CD4-positive, alpha-beta T cell (primary cell): ENCODE measurements at regions of chr9 and their contacts with region 1.

Region 1: DNA sequence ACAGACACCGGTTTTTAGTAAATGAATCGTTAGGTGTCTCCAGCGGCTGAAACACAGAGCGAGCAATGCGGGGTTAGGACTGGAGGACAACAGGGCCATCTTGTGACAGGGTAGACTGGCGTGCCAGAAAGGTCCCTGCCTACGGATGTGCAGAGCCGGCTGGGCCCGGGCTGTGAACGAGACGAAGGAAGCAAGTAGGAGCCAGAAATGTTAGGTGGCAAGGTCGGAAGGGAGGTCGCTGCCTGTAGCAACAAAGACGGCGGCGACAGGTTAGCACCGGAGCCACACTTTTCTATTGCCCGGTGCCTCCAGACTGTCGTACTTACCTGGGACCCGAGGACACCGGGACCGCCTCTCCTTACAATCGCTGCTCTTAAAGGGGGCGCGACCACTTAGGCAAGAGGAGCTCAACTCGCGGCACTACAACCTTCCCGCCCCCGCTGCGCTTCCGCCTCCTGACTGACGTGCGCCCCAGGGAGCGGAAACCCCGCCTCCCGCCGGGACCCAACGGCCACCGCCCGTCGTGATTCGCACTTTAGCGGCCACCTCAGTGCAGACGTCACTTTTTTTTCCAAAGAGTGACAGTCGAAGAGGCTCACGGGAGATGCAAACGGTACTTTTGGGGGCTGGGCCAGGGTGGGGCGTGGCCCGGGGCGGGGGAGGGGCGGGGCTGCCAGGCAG is at the start of gene INIP:
- DNase-seq: peak; percentile 91 to 99 (median 95)
- ATAC-seq: peak; percentile 89
- H3K4me3 ChIP-seq: peak within 1 kb of the TSS; percentile 96
- H3K4me3 Mint-ChIP-seq: peak within 1 kb of the TSS; percentile 99
- H3K27ac ChIP-seq: peak within 1 kb of the TSS; percentile 92 to 95
- H3K27ac Mint-ChIP-seq: peak within 1 kb of the TSS; percentile 99
- H3K4me1 ChIP-seq: peaks cover 15% of the 10 kb centered on the region
- H3K4me1 Mint-ChIP-seq: peaks cover 32% of the 10 kb centered on the region
- H3K27me3 ChIP-seq: no peaks in the 10 kb centered on the region
- H3K27me3 Mint-ChIP-seq: no peaks in the 10 kb centered on the region
- CTCF ChIP-seq: peak; percentile 34
- total RNA-seq, gene INIP: 7.8 to 9.1 TPM

Region 2: GRCh38 chr9:111525056-111525977 is 1192.5 kb before region 1 on chr9 and contains the start of gene ZNF483:
- CTCF ChIA-PET with region 1: no interaction called
- POLR2A ChIA-PET with region 1: interaction called, 5 read pairs
- intact Hi-C with region 1: loop called in 1 of 2 experiments (anchors 5 kb)
- DNase-seq: peak; percentile 54 to 90 (median 68)
- ATAC-seq: peak; percentile 90
- H3K4me3 ChIP-seq: peak within 1 kb of the TSS; percentile 93
- H3K4me3 Mint-ChIP-seq: peak within 1 kb of the TSS; percentile 97
- H3K27ac ChIP-seq: peak within 1 kb of the TSS; percentile 67 to 70
- H3K27ac Mint-ChIP-seq: peak within 1 kb of the TSS; percentile 97
- H3K4me1 ChIP-seq: peaks cover 19% of the 10 kb centered on the region
- H3K4me1 Mint-ChIP-seq: peaks cover 23% of the 10 kb centered on the region
- H3K27me3 ChIP-seq: peaks cover 0 to 2% of the 10 kb centered on the region in 2 experiments
- H3K27me3 Mint-ChIP-seq: no peaks in the 10 kb centered on the region
- CTCF ChIP-seq: no peak
- total RNA-seq, gene ZNF483: 28.5 to 32.9 TPM

Region 3: GRCh38 chr9:111631071-111631971 is 1086.5 kb before region 1 on chr9 and contains the start of gene DNAJC25:
- CTCF ChIA-PET with region 1: no interaction called
- POLR2A ChIA-PET with region 1: interaction called, 4 read pairs
- intact Hi-C with region 1: loop called in 1 of 2 experiments (anchors 5 kb)
- DNase-seq: peak; percentile 91 to 100 (median 96)
- ATAC-seq: peak; percentile 92
- H3K4me3 ChIP-seq: peak within 1 kb of the TSS; percentile 74
- H3K4me3 Mint-ChIP-seq: peak within 1 kb of the TSS; percentile 99
- H3K27ac ChIP-seq: peak within 1 kb of the TSS; percentile 3 to 75
- H3K27ac Mint-ChIP-seq: peak within 1 kb of the TSS; percentile 90
- H3K4me1 ChIP-seq: peaks cover 18% of the 10 kb centered on the region
- H3K4me1 Mint-ChIP-seq: peaks cover 58% of the 10 kb centered on the region
- H3K27me3 ChIP-seq: no peaks in the 10 kb centered on the region
- H3K27me3 Mint-ChIP-seq: no peaks in the 10 kb centered on the region
- CTCF ChIP-seq: no peak
- total RNA-seq, gene DNAJC25: 4.5 to 4.8 TPM

Region 4: GRCh38 chr9:112379177-112380101 is 338.4 kb before region 1 on chr9:
- CTCF ChIA-PET with region 1: no interaction called
- POLR2A ChIA-PET with region 1: interaction called, 15 read pairs
- intact Hi-C with region 1: no loop called
- DNase-seq: peak; percentile 94 to 100 (median 98)
- ATAC-seq: peak; percentile 96
- H3K4me3 ChIP-seq: peak overlapping the region; percentile 98
- H3K4me3 Mint-ChIP-seq: peak overlapping the region; percentile 100
- H3K27ac ChIP-seq: peak overlapping the region; percentile 89 to 94
- H3K27ac Mint-ChIP-seq: peak overlapping the region; percentile 98
- H3K4me1 ChIP-seq: peaks cover 17% of the 10 kb centered on the region
- H3K4me1 Mint-ChIP-seq: peaks cover 64% of the 10 kb centered on the region
- H3K27me3 ChIP-seq: no peaks in the 10 kb centered on the region
- H3K27me3 Mint-ChIP-seq: no peaks in the 10 kb centered on the region
- CTCF ChIP-seq: no peak

Region 5: GRCh38 chr9:112443200-112443599 is 274.6 kb before region 1 on chr9:
- CTCF ChIA-PET with region 1: no interaction called
- POLR2A ChIA-PET with region 1: interaction called, 3 read pairs
- intact Hi-C with region 1: loop called (anchors 2 to 5 kb)
- DNase-seq: peak in 13 of 14 experiments; percentile 1 to 59 (median 14)
- ATAC-seq: peak; percentile 43
- H3K4me3 ChIP-seq: no peak overlapping the region
- H3K4me3 Mint-ChIP-seq: no peak overlapping the region
- H3K27ac ChIP-seq: no peak overlapping the region
- H3K27ac Mint-ChIP-seq: no peak overlapping the region
- H3K4me1 ChIP-seq: no peaks in the 10 kb centered on the region
- H3K4me1 Mint-ChIP-seq: no peaks in the 10 kb centered on the region
- H3K27me3 ChIP-seq: no peaks in the 10 kb centered on the region
- H3K27me3 Mint-ChIP-seq: no peaks in the 10 kb centered on the region
- CTCF ChIP-seq: peak; percentile 47

Region 6: GRCh38 chr9:112486221-112487007 is 231.4 kb before region 1 on chr9 and contains the start of gene KIAA1958:
- CTCF ChIA-PET with region 1: interaction called, 4 read pairs
- POLR2A ChIA-PET with region 1: interaction called, 13 read pairs
- intact Hi-C with region 1: loop called (anchors 1 to 5 kb)
- DNase-seq: peak; percentile 54 to 92 (median 76)
- ATAC-seq: peak; percentile 72
- H3K4me3 ChIP-seq: peak within 1 kb of the TSS; percentile 69
- H3K4me3 Mint-ChIP-seq: peak within 1 kb of the TSS; percentile 97
- H3K27ac ChIP-seq: peak within 1 kb of the TSS; percentile 44 to 62
- H3K27ac Mint-ChIP-seq: peak within 1 kb of the TSS; percentile 86
- H3K4me1 ChIP-seq: peaks cover 18% of the 10 kb centered on the region
- H3K4me1 Mint-ChIP-seq: peaks cover 45% of the 10 kb centered on the region
- H3K27me3 ChIP-seq: no peaks in the 10 kb centered on the region
- H3K27me3 Mint-ChIP-seq: no peaks in the 10 kb centered on the region
- CTCF ChIP-seq: no peak
- total RNA-seq, gene KIAA1958: 5.6 to 6.8 TPM

Region 7: GRCh38 chr9:112750111-112750767 is 32.4 kb after region 1 on chr9 and contains the start of gene SNX30:
- CTCF ChIA-PET with region 1: interaction called, 5 read pairs
- POLR2A ChIA-PET with region 1: interaction called, 37 read pairs
- intact Hi-C with region 1: loop called (anchors 1 kb)
- DNase-seq: peak; percentile 49 to 92 (median 78)
- ATAC-seq: peak; percentile 65
- H3K4me3 ChIP-seq: peak within 1 kb of the TSS; percentile 81
- H3K4me3 Mint-ChIP-seq: peak within 1 kb of the TSS; percentile 91
- H3K27ac ChIP-seq: peak within 1 kb of the TSS; percentile 60 to 79
- H3K27ac Mint-ChIP-seq: peak within 1 kb of the TSS; percentile 81
- H3K4me1 ChIP-seq: peaks cover 55% of the 10 kb centered on the region
- H3K4me1 Mint-ChIP-seq: peaks cover 59% of the 10 kb centered on the region
- H3K27me3 ChIP-seq: no peaks in the 10 kb centered on the region
- H3K27me3 Mint-ChIP-seq: no peaks in the 10 kb centered on the region
- CTCF ChIP-seq: no peak
- total RNA-seq, gene SNX30: 5.2 to 5.8 TPM